ENCODE measurements at regions of chr5 and their contacts with region 1.

Region 1: GRCh38 chr5:139968547-139969261 is 74.4 kb downstream of the NRG2 start:
- DNase-seq: peak; percentile 74 to 89 (median 84)
- ATAC-seq: peak; percentile 100
- H3K4me3 ChIP-seq: no peak overlapping the region
- H3K4me3 Mint-ChIP-seq: no peak overlapping the region
- H3K27ac ChIP-seq: no peak overlapping the region
- H3K27ac Mint-ChIP-seq: no peak overlapping the region
- H3K4me1 ChIP-seq: peaks cover 7% of the 10 kb centered on the region
- H3K4me1 Mint-ChIP-seq: no peaks in the 10 kb centered on the region
- H3K27me3 ChIP-seq: peaks cover 0 to 5% of the 10 kb centered on the region in 2 experiments
- H3K27me3 Mint-ChIP-seq: peaks cover 45% of the 10 kb centered on the region
- CTCF ChIP-seq: peak; percentile 98

Region 2: DNA sequence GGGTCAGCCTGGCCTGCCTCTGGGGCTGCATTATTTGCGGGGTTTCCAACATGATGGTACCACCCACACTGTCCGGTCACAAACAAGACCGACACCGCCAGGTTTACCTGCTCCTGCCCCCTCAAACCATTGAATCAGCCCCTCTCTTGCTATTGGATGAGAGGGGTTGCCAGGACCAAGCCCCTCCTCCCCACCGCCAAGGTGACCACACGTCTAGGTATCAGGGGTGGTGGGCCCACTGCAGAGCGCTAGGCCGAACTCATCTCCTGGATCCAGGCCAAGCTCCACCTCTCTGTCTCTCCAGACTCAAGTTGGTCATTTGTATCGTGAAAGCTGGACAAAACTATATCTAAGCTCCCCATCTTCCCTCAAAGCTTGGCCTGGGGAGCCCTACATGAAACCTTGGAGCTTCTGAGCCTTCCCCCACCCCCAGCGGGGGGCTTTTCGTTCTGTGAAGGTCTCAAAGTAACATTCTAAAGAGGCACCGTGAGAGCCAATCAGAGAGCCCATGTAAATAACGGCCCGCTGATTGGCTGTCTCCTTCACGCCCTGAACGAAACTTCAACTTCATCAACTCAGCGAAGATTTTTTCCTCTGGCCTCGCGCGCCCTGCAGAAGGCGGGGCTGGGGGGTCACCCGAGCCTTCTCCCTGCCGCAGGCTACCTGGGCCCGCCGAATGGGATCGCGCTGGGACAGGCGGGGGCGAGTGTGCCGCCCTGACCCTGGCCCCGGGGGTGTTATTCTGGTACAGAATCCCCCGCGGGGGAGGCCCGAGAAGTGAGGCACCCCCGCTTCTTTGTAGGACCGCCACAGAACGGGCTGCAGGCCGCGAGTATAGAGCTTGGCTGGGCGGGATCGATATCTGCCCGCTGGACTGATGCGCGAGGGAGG is 222.7 kb before region 1 on chr5:
- CTCF ChIA-PET with region 1: no interaction called
- POLR2A ChIA-PET with region 1: no interaction called
- intact Hi-C with region 1: no loop called
- DNase-seq: peak in 10 of 14 experiments; percentile 23 to 75 (median 44)
- ATAC-seq: peak; percentile 58
- H3K4me3 ChIP-seq: peak overlapping the region; percentile 67
- H3K4me3 Mint-ChIP-seq: peak overlapping the region; percentile 87
- H3K27ac ChIP-seq: no peak overlapping the region
- H3K27ac Mint-ChIP-seq: no peak overlapping the region
- H3K4me1 ChIP-seq: peaks cover 31% of the 10 kb centered on the region
- H3K4me1 Mint-ChIP-seq: peaks cover 22% of the 10 kb centered on the region
- H3K27me3 ChIP-seq: peaks cover 7 to 19% of the 10 kb centered on the region in 2 experiments
- H3K27me3 Mint-ChIP-seq: peaks cover 25% of the 10 kb centered on the region
- CTCF ChIP-seq: no peak

Region 3: GRCh38 chr5:139769477-139769876 is 199.2 kb before region 1 on chr5:
- CTCF ChIA-PET with region 1: no interaction called
- POLR2A ChIA-PET with region 1: no interaction called
- intact Hi-C with region 1: no loop called
- DNase-seq: no peak
- ATAC-seq: no peak
- H3K4me3 ChIP-seq: no peak overlapping the region
- H3K4me3 Mint-ChIP-seq: no peak overlapping the region
- H3K27ac ChIP-seq: no peak overlapping the region
- H3K27ac Mint-ChIP-seq: no peak overlapping the region
- H3K4me1 ChIP-seq: peaks cover 15% of the 10 kb centered on the region
- H3K4me1 Mint-ChIP-seq: peaks cover 9% of the 10 kb centered on the region
- H3K27me3 ChIP-seq: peaks cover 9 to 10% of the 10 kb centered on the region in 2 experiments
- H3K27me3 Mint-ChIP-seq: peaks cover 19% of the 10 kb centered on the region
- CTCF ChIP-seq: no peak

Region 4: GRCh38 chr5:139956342-139956741 is 12.4 kb before region 1 on chr5:
- CTCF ChIA-PET with region 1: interaction called, 10 read pairs
- POLR2A ChIA-PET with region 1: no interaction called
- intact Hi-C with region 1: no loop called
- DNase-seq: no peak
- ATAC-seq: no peak
- H3K4me3 ChIP-seq: no peak overlapping the region
- H3K4me3 Mint-ChIP-seq: no peak overlapping the region
- H3K27ac ChIP-seq: no peak overlapping the region
- H3K27ac Mint-ChIP-seq: no peak overlapping the region
- H3K4me1 ChIP-seq: no peaks in the 10 kb centered on the region
- H3K4me1 Mint-ChIP-seq: no peaks in the 10 kb centered on the region
- H3K27me3 ChIP-seq: peaks cover 0 to under 1% of the 10 kb centered on the region in 2 experiments
- H3K27me3 Mint-ChIP-seq: peaks cover 5% of the 10 kb centered on the region
- CTCF ChIP-seq: no peak

Region 5: DNA sequence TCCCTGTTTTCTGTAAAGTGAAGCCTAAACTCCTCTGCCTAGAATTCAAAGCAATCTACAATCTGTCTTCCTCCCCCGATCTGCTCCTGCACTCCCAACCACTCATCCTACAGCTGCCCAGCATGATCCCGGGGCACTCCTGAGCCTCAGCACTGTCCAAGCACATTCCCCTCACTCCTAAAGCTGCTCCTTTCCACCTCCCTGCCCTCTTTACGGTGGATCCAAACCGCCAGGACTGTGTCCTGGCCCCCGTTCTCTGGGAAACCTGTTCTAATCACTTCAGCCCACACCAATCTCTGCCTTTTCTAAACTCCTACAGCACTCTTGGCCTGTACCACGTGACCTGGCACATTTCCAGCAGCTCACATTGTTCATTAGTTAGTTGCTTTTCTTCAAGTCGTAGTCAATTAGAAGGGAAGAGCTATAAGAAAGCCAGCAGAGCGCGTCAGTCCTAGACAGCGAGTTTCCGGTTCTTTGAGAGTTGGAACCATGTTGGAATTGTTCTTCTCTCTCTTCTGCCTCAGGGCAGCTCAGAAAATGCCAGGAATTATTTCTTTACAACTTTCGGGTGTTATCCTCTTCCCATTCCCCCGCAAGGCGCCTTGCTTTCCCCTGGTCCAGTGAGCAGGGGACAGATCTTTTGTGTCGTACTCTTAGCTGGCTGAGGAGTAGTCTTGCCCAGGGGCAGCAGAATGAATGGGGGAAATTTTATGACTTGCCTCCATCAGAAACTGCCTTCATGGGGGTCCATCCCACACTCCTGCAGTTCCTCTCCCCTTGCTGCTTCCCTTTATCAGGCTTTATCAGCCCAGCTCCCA is 13.7 kb after region 1 on chr5:
- CTCF ChIA-PET with region 1: interaction called, 11 read pairs
- POLR2A ChIA-PET with region 1: no interaction called
- intact Hi-C with region 1: no loop called
- DNase-seq: no peak
- ATAC-seq: no peak
- H3K4me3 ChIP-seq: no peak overlapping the region
- H3K4me3 Mint-ChIP-seq: no peak overlapping the region
- H3K27ac ChIP-seq: no peak overlapping the region
- H3K27ac Mint-ChIP-seq: no peak overlapping the region
- H3K4me1 ChIP-seq: no peaks in the 10 kb centered on the region
- H3K4me1 Mint-ChIP-seq: no peaks in the 10 kb centered on the region
- H3K27me3 ChIP-seq: peaks cover 21 to 22% of the 10 kb centered on the region in 2 experiments
- H3K27me3 Mint-ChIP-seq: peaks cover 58% of the 10 kb centered on the region
- CTCF ChIP-seq: no peak

Region 6: GRCh38 chr5:140157032-140157803 is 188.5 kb after region 1 on chr5:
- CTCF ChIA-PET with region 1: no interaction called
- POLR2A ChIA-PET with region 1: no interaction called
- intact Hi-C with region 1: loop called in 1 of 2 experiments (anchors 5 kb)
- DNase-seq: peak; percentile 79 to 93 (median 84)
- ATAC-seq: peak; percentile 100
- H3K4me3 ChIP-seq: no peak overlapping the region
- H3K4me3 Mint-ChIP-seq: peak overlapping the region; percentile 50
- H3K27ac ChIP-seq: no peak overlapping the region
- H3K27ac Mint-ChIP-seq: peak overlapping the region; percentile 21
- H3K4me1 ChIP-seq: peaks cover 10% of the 10 kb centered on the region
- H3K4me1 Mint-ChIP-seq: peaks cover 15% of the 10 kb centered on the region
- H3K27me3 ChIP-seq: no peaks in the 10 kb centered on the region
- H3K27me3 Mint-ChIP-seq: no peaks in the 10 kb centered on the region
- CTCF ChIP-seq: peak; percentile 86

Measured in CD4-positive, alpha-beta T cell (primary cell).